Ascending aorta (tissue), 2 donors: ENCODE measurements at regions of chr3 and their contacts with region 1.

Region 1: GRCh38 chr3:141370065-141370533 is 1.8 kb downstream of the ZBTB38 start:
- DNase-seq: peak; percentile 26 to 83
- H3K4me3 ChIP-seq: peak overlapping the region; percentile 52 to 61
- H3K27ac ChIP-seq: peak overlapping the region; percentile 98 to 99
- H3K4me1 ChIP-seq: peaks cover 6 to 37% of the 10 kb centered on the region in 2 donors
- H3K27me3 ChIP-seq: no peaks in the 10 kb centered on the region
- CTCF ChIP-seq: peak; percentile 29 to 60 (median 59)

Region 2: DNA sequence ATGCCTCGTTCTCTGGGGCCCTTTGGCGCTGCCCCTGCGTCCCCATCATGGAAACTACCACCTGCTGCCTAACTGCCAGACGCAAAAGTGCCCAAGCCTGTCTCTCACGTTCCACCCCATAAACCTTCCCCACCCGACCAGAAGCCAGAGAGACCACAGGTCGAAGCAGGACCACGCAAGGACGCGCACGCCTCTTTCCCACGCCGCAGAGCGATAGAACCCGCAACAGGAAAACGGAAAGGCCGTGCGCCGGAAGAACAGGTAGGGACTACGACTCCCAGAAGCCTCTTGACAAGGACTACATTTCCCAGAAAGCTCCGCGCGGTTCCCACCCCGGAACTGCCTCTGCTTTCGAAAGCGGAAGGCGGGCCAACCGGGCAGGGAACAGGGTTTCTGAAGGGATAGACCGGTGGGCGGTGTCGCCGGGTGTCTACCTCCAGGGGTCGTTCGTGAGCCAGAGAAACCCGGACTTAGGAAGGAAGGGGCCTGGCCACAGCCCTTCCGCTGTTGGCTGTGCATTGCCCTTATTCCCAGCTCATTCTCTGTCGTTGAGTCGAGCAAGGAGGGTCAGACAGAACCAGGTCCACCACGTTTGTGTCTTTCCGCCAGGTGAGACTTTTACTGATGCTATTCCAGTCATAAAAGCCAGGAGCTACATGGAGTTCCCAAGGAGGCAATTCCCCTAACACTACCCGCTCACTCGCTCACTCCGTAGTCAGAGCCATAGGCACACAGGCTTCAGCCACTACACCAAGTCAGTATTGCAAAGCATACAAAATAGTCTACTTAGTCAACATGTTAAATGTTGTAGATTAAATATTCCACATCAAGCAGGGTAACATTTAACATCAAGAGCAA is 58.4 kb before region 1 on chr3:
- intact Hi-C with region 1: loop called (anchors 2 kb)
- DNase-seq: peak; percentile 95 to 99
- H3K4me3 ChIP-seq: peak overlapping the region; percentile 59 to 89
- H3K27ac ChIP-seq: peak overlapping the region; percentile 63 to 82
- H3K4me1 ChIP-seq: peaks cover 0 to 8% of the 10 kb centered on the region in 2 donors
- H3K27me3 ChIP-seq: no peaks in the 10 kb centered on the region
- CTCF ChIP-seq: peak; percentile 72 to 85 (median 76)

Region 3: DNA sequence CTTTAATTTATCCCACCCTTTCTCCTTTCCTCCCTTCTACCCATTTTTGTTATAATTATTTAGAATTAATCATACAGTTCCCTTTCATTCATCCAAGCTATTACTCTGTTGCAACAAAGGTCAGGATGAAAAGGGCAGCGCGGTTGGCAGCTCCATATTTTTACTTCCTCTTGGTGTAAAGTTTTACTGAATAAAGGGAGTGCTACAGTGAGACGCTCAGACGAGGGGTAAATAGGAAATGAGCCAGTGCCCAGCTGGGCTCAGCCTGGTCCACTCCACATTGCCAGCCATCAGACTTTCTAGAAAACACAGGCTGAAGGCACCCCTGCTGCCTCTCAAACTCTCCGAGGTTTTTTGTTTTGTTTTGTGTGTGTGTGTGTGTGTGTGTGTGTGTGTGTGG is 23.7 kb before region 1 on chr3:
- intact Hi-C with region 1: no loop called
- DNase-seq: no peak
- H3K4me3 ChIP-seq: no peak overlapping the region
- H3K27ac ChIP-seq: no peak overlapping the region
- H3K4me1 ChIP-seq: no peaks in the 10 kb centered on the region
- H3K27me3 ChIP-seq: no peaks in the 10 kb centered on the region
- CTCF ChIP-seq: no peak

Region 4: DNA sequence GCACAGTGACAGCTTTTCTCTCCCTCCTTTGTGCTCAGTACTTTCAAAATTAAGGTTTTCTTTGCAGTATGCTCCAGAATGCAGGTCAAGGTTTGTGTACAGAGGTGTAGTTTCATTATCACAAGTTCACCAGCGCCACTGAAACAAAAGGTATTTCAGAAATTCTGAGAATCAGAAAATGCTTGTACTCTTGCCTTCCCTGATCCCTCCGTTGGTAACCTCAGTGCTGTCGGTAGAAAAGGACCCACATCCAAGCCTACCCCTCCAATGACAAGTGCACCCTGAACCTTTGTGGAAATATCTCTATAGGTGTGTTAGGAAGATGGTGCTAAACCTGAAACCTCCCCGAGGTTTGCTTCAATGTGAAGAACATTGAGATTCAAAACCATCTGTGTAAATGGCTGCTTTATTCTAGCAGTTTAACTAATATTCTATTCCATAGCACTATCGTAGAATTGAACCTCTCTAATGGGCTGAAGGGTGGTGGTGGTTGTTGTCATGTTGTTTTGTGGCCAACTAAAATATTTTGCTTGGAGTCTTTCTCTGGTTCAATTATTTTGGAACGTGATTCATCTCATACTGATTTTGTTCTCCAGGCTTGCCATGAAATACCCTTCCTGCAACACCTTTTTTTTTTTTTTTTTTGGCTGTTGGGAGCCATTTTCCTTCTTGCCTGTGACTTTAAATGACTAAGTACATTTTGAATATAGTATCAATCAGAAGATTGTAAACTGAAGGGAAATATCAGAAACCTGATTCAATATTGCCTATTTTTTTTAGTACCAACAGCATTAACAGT is 18.9 kb after region 1 on chr3:
- intact Hi-C with region 1: loop called (anchors 2 kb)
- DNase-seq: no peak
- H3K4me3 ChIP-seq: peak overlapping the region in 1 of 2 donors; percentile 54
- H3K27ac ChIP-seq: peak overlapping the region; percentile 57 to 68
- H3K4me1 ChIP-seq: peaks cover 7 to 25% of the 10 kb centered on the region in 2 donors
- H3K27me3 ChIP-seq: no peaks in the 10 kb centered on the region
- CTCF ChIP-seq: no peak

Region 5: GRCh38 chr3:141402476-141403171 is 32.5 kb after region 1 on chr3:
- intact Hi-C with region 1: loop called (anchors 2 kb)
- DNase-seq: peak in 1 of 2 donors; percentile 81
- H3K4me3 ChIP-seq: peak overlapping the region; percentile 85 to 88
- H3K27ac ChIP-seq: peak overlapping the region; percentile 89 to 99
- H3K4me1 ChIP-seq: peaks cover 2 to 50% of the 10 kb centered on the region in 2 donors
- H3K27me3 ChIP-seq: no peaks in the 10 kb centered on the region
- CTCF ChIP-seq: peak in 1 of 3 experiments; percentile 7

Region 6: DNA sequence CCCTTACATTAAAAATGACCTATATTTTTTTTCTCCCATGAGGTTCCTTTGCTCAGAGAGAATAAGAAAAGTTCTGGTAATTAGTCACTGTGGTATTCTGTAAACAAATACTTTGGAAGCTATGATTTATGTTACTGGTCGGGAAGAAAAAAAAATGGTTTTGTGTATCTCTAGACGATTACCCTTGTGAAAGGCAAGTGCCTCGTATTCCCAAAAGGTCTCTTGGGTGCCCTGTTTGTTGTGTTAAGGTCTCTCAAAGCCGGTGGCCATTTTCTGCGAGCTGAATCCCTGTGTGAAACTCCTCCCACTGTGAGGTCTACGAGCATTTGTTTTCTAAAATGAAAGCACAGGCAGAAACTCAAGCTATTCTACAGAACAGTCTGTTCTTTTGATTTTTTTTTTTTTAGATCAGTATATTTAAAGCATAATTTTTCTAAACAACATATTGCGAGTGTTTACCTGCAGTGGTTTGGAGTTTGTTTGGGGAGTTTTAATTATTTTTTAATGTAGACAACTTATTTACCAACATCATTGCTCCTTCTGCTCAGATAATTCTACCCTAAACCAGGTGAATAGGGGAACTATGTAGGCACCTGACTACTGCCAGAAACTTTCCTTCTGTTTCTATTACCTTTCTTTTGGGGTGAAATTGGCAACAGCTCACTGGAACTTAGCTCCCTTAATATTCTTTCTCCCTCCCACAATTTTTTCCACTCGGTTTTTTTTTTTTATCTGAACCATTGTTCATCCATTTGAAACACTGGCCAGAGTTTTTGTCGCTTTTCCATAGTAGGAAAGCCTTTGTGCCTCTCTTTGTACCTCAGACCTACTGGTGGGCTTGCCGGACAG is 42.2 kb after region 1 on chr3:
- intact Hi-C with region 1: loop called (anchors 1 kb)
- DNase-seq: peak in 1 of 2 donors; percentile 84
- H3K4me3 ChIP-seq: peak overlapping the region; percentile 43 to 54
- H3K27ac ChIP-seq: peak overlapping the region; percentile 92 to 99
- H3K4me1 ChIP-seq: peaks cover 12 to 72% of the 10 kb centered on the region in 2 donors
- H3K27me3 ChIP-seq: no peaks in the 10 kb centered on the region
- CTCF ChIP-seq: no peak

Region 7: DNA sequence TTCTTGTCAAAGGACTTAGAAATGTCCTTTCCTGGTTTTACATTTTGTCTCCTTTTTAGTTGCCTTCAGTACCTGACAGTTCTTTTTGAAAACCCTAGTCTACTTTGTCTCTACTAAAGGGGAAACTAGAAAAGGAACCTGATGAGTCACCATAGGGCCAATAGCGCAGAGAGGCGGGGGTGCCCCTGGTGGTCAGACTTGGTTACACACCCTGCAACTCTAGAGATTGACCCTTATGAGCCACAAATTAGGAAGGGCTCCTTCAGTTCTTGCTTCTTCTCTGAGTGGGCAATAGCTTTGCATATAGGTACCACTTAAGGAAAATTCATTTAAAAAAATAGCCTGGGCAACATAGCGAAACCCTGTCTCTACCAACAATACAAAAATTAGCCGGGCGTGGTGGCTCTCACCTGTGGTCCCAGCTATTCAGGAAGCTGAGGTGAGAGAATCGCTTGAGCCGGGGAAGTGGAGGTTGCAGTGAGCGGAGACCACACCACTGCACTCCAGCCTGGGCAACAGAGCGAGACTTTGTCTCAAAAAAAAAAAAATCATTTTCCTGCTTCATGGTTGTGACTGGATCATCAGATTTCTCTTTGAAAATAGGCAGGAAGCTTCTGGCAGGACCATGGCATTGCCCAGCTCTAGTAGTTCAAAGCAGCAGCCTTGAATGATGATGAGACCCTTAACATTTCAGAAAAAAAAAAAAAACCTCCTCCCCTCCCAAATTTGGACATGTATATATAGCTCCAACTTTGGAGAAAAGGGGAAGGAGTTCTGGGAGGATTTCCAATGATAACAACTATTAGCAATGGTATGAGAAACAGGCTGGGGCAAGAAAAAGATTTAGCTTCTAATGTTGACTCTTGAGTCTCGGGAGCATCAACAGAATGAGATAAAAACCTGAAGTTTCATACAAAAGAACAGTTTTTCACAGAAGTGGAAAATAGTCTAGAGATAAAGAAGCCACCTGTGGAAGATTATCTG is 71.6 kb after region 1 on chr3:
- intact Hi-C with region 1: loop called (anchors 2 kb)
- DNase-seq: no peak
- H3K4me3 ChIP-seq: peak overlapping the region in 1 of 2 donors; percentile 38
- H3K27ac ChIP-seq: peak overlapping the region; percentile 72 to 80
- H3K4me1 ChIP-seq: peaks cover 0 to 22% of the 10 kb centered on the region in 2 donors
- H3K27me3 ChIP-seq: no peaks in the 10 kb centered on the region
- CTCF ChIP-seq: peak; percentile 37 to 52 (median 51)